IMR-90 (cell line): ENCODE measurements at regions of chr15 and their contacts with region 1.

Region 1: DNA sequence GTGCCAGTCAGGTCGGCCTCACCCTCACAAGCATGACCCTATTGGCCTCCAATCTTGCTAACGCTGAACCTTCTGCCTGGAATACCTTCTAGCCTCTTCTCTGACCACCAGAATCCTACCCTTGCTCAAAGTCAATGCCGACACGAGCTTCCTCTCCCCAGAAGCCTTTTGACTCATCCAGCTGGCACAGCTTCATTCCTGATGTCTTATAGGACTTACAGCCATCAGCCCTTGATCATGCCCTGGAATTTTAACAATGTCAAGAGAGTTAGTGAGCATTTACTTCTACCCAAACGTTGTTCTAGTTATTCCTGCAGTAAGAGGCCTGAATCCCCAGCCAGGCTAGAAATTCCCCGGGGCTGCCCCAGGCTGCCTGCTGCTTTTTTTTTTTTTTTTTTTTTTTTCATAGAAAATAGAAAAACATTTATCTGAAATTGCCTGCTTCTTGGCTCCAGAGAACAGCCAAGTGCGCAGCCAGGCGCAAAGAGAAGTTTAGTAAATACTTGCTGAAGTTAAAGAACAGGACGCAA is 3.9 kb downstream of the CYP1A2 start:
- DNase-seq: peak; percentile 34
- ATAC-seq: peak; percentile 75
- H3K4me3 ChIP-seq: no peak overlapping the region
- H3K27ac ChIP-seq: no peak overlapping the region
- H3K4me1 ChIP-seq: no peaks in the 10 kb centered on the region
- H3K27me3 ChIP-seq: peaks cover 35% of the 10 kb centered on the region
- CTCF ChIP-seq: no peak
- POLR2A ChIP-seq: no peak
- RAD21 ChIP-seq: no peak

Region 2: DNA sequence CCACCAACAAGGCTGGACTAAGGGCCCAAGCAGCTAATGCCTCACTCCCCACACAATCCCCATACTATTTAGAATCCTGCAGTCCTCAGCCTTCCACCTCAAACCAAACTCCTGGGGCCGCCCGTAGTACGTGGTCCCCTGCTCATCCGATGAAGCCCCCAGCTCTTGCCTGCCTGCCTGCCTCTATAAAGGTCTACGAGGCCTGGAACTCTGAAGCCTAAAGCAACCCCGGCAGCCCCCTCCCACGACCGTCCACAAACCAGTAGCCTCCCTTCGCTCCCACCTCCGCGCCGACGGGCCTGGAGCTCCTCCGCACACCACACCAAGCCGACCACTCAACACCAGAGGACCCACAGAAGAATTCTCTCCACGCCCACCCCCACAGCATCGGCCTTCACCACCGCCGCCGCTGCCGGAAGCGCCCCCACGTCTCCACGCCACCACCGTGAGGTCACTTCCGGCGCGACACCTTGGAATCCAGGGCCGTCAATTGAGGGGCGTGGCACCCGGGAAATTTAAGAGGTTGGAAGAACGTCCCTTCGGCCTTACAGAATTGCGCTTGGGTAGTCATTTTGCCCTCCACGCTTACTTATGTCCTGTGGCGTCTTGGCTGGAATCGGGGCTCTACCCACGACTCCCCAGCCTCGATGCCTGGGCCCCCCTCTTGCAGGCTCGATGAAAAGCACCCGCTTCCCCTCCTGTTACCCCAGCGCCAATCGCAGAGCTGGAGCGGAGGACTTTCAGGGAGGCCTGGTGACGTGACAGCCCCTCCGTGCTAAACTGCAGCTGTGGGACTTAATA is 56.8 kb before region 1 on chr15 and contains the start of gene EDC3:
- CTCF ChIA-PET with region 1: no interaction called
- POLR2A ChIA-PET with region 1: no interaction called
- dilution Hi-C with region 1: no loop called
- in situ Hi-C with region 1: no loop called
- intact Hi-C with region 1: loop called (anchors 10 kb)
- DNase-seq: peak; percentile 77
- ATAC-seq: peak; percentile 97
- H3K4me3 ChIP-seq: peak within 1 kb of the TSS; percentile 85
- H3K27ac ChIP-seq: peak within 1 kb of the TSS; percentile 89
- H3K4me1 ChIP-seq: peaks cover 2% of the 10 kb centered on the region
- H3K27me3 ChIP-seq: no peaks in the 10 kb centered on the region
- CTCF ChIP-seq: no peak
- POLR2A ChIP-seq: peak; percentile 70; the same call in 1 of the 2 replicates
- RAD21 ChIP-seq: no peak
- total RNA-seq, gene EDC3: 16.7 and 16.8 TPM in 2 replicates

Region 3: GRCh38 chr15:74787251-74788041 is 34.9 kb after region 1 on chr15:
- CTCF ChIA-PET with region 1: no interaction called
- POLR2A ChIA-PET with region 1: no interaction called
- dilution Hi-C with region 1: no loop called
- in situ Hi-C with region 1: no loop called
- intact Hi-C with region 1: no loop called
- DNase-seq: peak; percentile 71
- ATAC-seq: peak; percentile 59
- H3K4me3 ChIP-seq: no peak overlapping the region
- H3K27ac ChIP-seq: no peak overlapping the region
- H3K4me1 ChIP-seq: peaks cover 35% of the 10 kb centered on the region
- H3K27me3 ChIP-seq: no peaks in the 10 kb centered on the region
- CTCF ChIP-seq: peak; percentile 66
- POLR2A ChIP-seq: no peak
- RAD21 ChIP-seq: no peak

Region 4: DNA sequence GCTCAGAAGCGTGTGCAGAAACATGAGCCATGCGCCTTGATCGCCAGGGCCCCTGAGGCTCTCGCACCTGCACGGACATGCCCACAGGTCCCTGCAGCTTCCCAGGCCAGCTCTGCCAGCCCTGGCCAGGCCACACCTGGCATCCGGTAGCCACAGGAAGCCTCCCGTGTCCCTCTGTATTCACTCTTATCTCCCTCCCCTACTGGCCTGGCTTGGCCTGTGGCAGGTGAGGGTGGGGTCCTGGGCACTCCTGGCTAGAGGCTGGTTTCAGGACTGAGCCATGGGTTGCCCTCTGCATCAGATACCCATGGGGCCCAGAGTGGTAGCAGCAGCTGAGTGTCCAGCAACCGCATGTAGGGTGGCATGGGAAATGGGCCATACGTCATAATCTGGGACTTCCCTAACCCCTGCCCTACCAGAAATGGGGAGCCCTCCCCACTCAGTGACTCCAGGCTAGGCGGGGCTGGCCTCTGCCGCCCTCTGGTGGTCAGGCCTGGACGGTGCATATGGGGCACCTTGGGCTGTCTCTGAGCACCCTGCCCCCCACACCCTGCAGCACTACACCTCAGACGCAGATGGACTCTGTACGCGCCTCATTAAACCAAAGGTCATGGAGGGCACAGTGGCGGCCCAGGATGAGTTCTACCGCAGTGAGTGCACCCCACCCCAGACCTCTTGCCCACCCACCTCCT is 47.4 kb after region 1 on chr15:
- CTCF ChIA-PET with region 1: no interaction called
- POLR2A ChIA-PET with region 1: no interaction called
- dilution Hi-C with region 1: no loop called
- in situ Hi-C with region 1: no loop called
- intact Hi-C with region 1: no loop called
- DNase-seq: peak; percentile 52
- ATAC-seq: peak; percentile 99
- H3K4me3 ChIP-seq: no peak overlapping the region
- H3K27ac ChIP-seq: no peak overlapping the region
- H3K4me1 ChIP-seq: peaks cover 2% of the 10 kb centered on the region; the same call in 1 of the 2 replicates
- H3K27me3 ChIP-seq: no peaks in the 10 kb centered on the region
- CTCF ChIP-seq: peak; percentile 93
- POLR2A ChIP-seq: 0 out of 2 replicates have a peak, but pooled peaks have one; percentile 28
- RAD21 ChIP-seq: peak; percentile 89